HEK293T (cell line): ENCODE measurements at regions of chr5 and their contacts with region 1.

Region 1: DNA sequence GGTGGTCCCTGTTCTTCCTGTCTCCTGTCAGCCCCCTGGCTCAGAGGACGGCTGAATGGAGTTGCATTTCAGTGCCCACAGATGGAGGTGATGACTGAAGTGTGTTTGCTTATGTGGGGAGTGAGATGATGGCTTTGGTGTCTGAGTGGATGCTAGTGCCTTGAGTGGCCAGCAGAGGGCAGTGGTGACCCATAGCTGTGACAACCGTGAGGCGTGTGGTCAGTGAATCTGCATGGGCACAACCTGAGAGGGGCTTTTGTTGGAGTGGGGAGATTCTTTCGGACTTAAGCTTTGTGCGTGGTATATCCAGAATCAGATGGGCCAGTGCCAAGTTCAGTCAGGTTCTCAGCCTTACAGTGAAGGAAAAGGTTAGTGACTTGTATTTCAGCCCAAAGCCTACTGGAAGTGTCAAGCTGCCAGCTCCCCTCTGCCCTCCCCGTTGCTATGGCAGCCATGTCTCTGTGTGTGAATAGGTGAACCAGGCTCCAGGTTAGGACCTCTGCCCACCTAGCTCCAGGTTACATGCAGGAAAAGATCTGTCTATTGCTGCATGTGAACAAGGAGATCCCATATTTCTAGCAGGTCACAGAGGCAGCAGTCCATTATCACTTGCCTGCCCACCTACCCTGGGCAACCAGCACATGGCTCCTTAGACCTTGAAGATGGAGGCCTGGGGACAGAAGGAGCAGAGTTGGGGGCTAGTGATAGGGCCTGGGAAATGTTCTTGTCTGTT is 14.7 kb upstream of the CXXC5 start:
- DNase-seq: peak; percentile 85

Region 2: GRCh38 chr5:139619861-139620260 is 13.6 kb before region 1 on chr5:
- CTCF ChIA-PET with region 1: no interaction called
- POLR2A ChIA-PET with region 1: no interaction called
- DNase-seq: no peak

Region 3: GRCh38 chr5:139648205-139649081 is 15.0 kb after region 1 on chr5 and contains the start of gene CXXC5:
- CTCF ChIA-PET with region 1: interaction called, 11 read pairs
- POLR2A ChIA-PET with region 1: interaction called, 15 read pairs
- DNase-seq: peak; percentile 83

Region 4: GRCh38 chr5:139670369-139671095 is 37.1 kb after region 1 on chr5:
- CTCF ChIA-PET with region 1: interaction called, 10 read pairs
- POLR2A ChIA-PET with region 1: interaction called, 3 read pairs
- DNase-seq: peak; percentile 33